PC-9 (cell line): ENCODE measurements at regions of chr1 and their contacts with region 1.

Region 1: GRCh38 chr1:231376875-231377549 is 38.9 kb downstream of the SPRTN start:
- DNase-seq: no peak
- H3K4me3 ChIP-seq: no peak overlapping the region
- H3K27ac ChIP-seq: no peak overlapping the region
- H3K4me1 ChIP-seq: no peaks in the 10 kb centered on the region
- H3K27me3 ChIP-seq: no peaks in the 10 kb centered on the region
- CTCF ChIP-seq: no peak

Region 2: GRCh38 chr1:230394134-230394533 is 982.9 kb before region 1 on chr1:
- CTCF ChIA-PET with region 1: no interaction called
- POLR2A ChIA-PET with region 1: interaction called, 11 read pairs
- intact Hi-C with region 1: no loop called
- DNase-seq: no peak
- H3K4me3 ChIP-seq: no peak overlapping the region
- H3K27ac ChIP-seq: no peak overlapping the region
- H3K4me1 ChIP-seq: no peaks in the 10 kb centered on the region
- H3K27me3 ChIP-seq: peaks cover 65% of the 10 kb centered on the region
- CTCF ChIP-seq: no peak

Region 3: GRCh38 chr1:230922620-230923019 is 454.4 kb before region 1 on chr1:
- CTCF ChIA-PET with region 1: no interaction called
- POLR2A ChIA-PET with region 1: no interaction called
- intact Hi-C with region 1: no loop called
- DNase-seq: no peak
- H3K4me3 ChIP-seq: no peak overlapping the region
- H3K27ac ChIP-seq: no peak overlapping the region
- H3K4me1 ChIP-seq: no peaks in the 10 kb centered on the region
- H3K27me3 ChIP-seq: no peaks in the 10 kb centered on the region
- CTCF ChIP-seq: no peak

Region 4: DNA sequence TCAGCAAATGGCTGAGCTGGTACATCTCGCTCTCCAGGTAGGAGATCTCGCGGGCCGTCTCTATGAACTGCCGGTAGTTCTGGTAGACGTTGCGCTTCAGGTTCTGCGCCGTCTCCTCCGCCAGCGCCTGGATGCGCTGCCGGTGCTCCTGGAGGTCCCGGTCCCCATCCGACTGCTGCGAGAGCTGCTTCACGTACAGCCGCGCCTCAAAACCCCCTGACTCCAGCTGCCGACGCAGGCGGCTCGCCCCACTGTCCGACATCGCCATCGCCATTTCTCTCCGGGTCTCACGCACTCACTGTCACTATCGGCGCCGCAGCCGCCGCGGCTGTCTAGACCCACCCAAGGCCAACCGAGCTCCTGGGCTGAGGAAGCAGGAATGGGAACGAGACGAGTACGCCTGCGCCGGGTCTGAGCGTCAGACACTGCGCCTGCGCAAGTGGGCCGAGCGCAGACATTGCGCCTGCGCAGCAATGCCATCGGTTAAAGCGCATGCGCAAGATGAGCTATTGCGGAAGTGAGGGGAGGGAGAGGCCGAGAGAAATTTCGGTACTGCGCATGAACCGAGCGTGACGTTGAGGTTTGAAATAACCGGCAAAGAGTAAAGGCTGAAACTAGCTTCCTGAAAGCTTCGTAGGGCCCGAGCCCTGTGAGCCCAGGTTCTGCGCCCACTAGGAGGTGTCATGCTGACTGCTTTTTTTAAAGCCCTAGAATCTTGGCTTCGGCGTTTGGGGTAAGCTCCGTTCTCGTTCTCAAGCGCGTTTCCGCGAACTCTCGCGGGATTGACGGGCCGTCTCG is 39.3 kb before region 1 on chr1 and contains the start of gene EXOC8:
- CTCF ChIA-PET with region 1: no interaction called
- POLR2A ChIA-PET with region 1: no interaction called
- intact Hi-C with region 1: no loop called
- DNase-seq: peak; percentile 92 to 98
- H3K4me3 ChIP-seq: peak within 1 kb of the TSS; percentile 72
- H3K27ac ChIP-seq: peak within 1 kb of the TSS; percentile 89
- H3K4me1 ChIP-seq: peaks cover 51% of the 10 kb centered on the region
- H3K27me3 ChIP-seq: no peaks in the 10 kb centered on the region
- CTCF ChIP-seq: no peak
- total RNA-seq, gene EXOC8: 11.2 and 12.1 TPM in 2 replicates

Region 5: GRCh38 chr1:231395076-231395995 is 18.3 kb after region 1 on chr1:
- CTCF ChIA-PET with region 1: no interaction called
- POLR2A ChIA-PET with region 1: interaction called, 10 read pairs
- intact Hi-C with region 1: no loop called
- DNase-seq: peak; percentile 43 to 84
- H3K4me3 ChIP-seq: peak overlapping the region; percentile 33; the same call in 1 of the 2 replicates
- H3K27ac ChIP-seq: peak overlapping the region; percentile 79
- H3K4me1 ChIP-seq: peaks cover 34% of the 10 kb centered on the region
- H3K27me3 ChIP-seq: no peaks in the 10 kb centered on the region
- CTCF ChIP-seq: no peak

Region 6: GRCh38 chr1:232542638-232543593 is 1165.9 kb after region 1 on chr1:
- CTCF ChIA-PET with region 1: no interaction called
- POLR2A ChIA-PET with region 1: no interaction called
- intact Hi-C with region 1: no loop called
- DNase-seq: no peak
- H3K4me3 ChIP-seq: no peak overlapping the region
- H3K27ac ChIP-seq: no peak overlapping the region
- H3K4me1 ChIP-seq: peaks cover 15% of the 10 kb centered on the region
- H3K27me3 ChIP-seq: no peaks in the 10 kb centered on the region
- CTCF ChIP-seq: no peak